ENCODE measurements at regions of chr6 and their contacts with region 1.

Region 1: DNA sequence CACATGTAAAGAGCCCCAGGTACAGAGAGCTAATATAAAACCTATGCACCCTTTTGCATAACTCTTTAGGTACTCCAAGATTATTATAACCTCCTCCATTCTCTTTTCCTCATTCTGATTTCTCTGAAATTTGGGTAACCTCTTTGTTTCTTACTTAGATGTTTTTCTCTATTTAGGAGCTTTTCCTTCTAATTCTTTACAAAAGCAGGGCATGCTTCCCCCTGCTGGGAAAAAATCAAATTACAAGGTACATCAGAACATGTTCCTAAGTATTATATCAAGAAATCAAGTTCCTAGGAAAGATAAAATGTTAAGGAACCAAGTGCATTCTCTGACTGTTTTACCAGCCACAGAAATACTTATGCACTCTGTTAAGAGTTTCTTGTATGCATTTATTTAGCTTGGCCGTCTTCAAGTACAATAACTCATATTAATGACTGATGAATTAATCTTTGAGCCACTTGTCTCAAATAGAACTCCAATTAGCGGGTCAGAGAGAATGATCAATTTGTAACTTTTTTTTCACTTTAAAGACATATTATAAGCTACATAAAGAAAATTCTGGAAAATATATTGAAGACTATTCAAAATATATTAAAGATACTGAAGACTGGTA is 2.1 kb downstream of the KHDRBS2 start:
- DNase-seq: peak; percentile 50
- ATAC-seq: no peak
- H3K4me3 ChIP-seq: no peak overlapping the region
- H3K27ac ChIP-seq: no peak overlapping the region
- H3K4me1 ChIP-seq: no peaks in the 10 kb centered on the region
- H3K27me3 ChIP-seq: peaks cover 2 to 13% of the 10 kb centered on the region in 2 experiments; a peak in 4 of 5 replicates
- CTCF ChIP-seq: peak; percentile 46; the same call in 1 of the 2 replicates
- EP300 ChIP-seq: no peak
- POLR2A ChIP-seq: no peak
- RAD21 ChIP-seq: no peak

Region 2: GRCh38 chr6:61809004-61809595 is 474.8 kb before region 1 on chr6:
- CTCF ChIA-PET with region 1: interaction called, 6 read pairs
- POLR2A ChIA-PET with region 1: no interaction called
- in situ Hi-C with region 1: no loop called
- intact Hi-C with region 1: loop called (anchors 1 kb)
- DNase-seq: peak; percentile 45
- ATAC-seq: peak; percentile 74
- H3K4me3 ChIP-seq: no peak overlapping the region
- H3K27ac ChIP-seq: no peak overlapping the region
- H3K4me1 ChIP-seq: no peaks in the 10 kb centered on the region
- H3K27me3 ChIP-seq: no peaks in the 10 kb centered on the region
- CTCF ChIP-seq: peak; percentile 56
- EP300 ChIP-seq: no peak
- POLR2A ChIP-seq: no peak
- RAD21 ChIP-seq: no peak

Region 3: GRCh38 chr6:61886608-61887259 is 397.2 kb before region 1 on chr6:
- CTCF ChIA-PET with region 1: no interaction called
- POLR2A ChIA-PET with region 1: no interaction called
- in situ Hi-C with region 1: no loop called
- intact Hi-C with region 1: loop called (anchors 2 kb)
- DNase-seq: peak; percentile 17
- ATAC-seq: peak; percentile 59
- H3K4me3 ChIP-seq: no peak overlapping the region
- H3K27ac ChIP-seq: no peak overlapping the region
- H3K4me1 ChIP-seq: no peaks in the 10 kb centered on the region
- H3K27me3 ChIP-seq: no peaks in the 10 kb centered on the region
- CTCF ChIP-seq: 0 out of 2 replicates have a peak, but pooled peaks have one; percentile 9
- EP300 ChIP-seq: no peak
- POLR2A ChIP-seq: no peak
- RAD21 ChIP-seq: no peak

Region 4: DNA sequence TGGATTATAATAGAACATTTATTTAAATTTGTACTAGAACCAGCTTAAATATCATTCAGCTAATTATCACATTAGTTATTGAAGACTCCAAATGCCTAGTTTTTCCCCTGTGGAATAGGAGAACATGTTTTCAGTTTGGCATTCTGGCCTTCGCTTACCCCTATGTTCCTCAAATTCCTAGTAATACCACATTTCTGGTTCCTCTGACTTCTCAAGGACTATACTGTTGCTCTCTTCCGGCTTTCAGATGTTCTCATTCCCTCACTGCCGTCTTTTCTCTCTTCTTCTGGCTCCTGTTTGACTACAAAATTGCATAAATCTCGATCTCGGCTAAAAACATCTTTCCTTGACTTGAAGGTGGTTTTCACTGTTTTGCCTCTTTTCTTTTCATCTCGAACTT is 73.9 kb after region 1 on chr6:
- CTCF ChIA-PET with region 1: no interaction called
- POLR2A ChIA-PET with region 1: no interaction called
- in situ Hi-C with region 1: no loop called
- intact Hi-C with region 1: no loop called
- DNase-seq: no peak
- ATAC-seq: no peak
- H3K4me3 ChIP-seq: no peak overlapping the region
- H3K27ac ChIP-seq: no peak overlapping the region
- H3K4me1 ChIP-seq: no peaks in the 10 kb centered on the region
- H3K27me3 ChIP-seq: no peaks in the 10 kb centered on the region
- CTCF ChIP-seq: no peak
- EP300 ChIP-seq: no peak
- POLR2A ChIP-seq: no peak
- RAD21 ChIP-seq: no peak

Measured in HepG2 (cell line).